CD8-positive, alpha-beta memory T cell (primary cell): ENCODE measurements at regions of chr9 and their contacts with region 1.

Region 1: DNA sequence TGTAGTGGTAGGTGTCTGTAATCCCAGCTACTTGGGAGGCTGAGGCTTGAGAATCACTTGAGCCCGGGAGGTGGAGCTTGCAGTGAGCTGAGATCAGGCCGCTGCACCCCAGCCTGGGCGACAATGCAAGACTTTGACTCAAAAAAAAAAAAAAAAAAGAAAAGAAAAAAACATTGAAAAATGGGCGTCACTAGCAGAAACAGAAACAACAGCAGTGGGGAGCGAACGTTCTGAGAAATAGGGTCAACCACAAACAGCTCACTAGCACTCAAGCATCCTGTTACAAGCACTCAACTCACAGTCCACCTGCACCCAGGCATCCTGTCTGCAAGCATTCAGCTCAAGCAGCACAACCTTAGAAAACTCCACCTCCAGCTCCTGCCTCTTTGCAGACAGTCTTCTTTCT is 17.2 kb downstream of the TRIM14 start:
- DNase-seq: peak; percentile 66 to 92 (median 90)
- H3K4me3 ChIP-seq: peak overlapping the region; percentile 23
- H3K4me3 Mint-ChIP-seq: peak overlapping the region; percentile 65 to 87 (median 78)
- H3K27ac ChIP-seq: no peak overlapping the region
- H3K27ac Mint-ChIP-seq: peak overlapping the region; percentile 93 to 99 (median 96)
- H3K4me1 ChIP-seq: peaks cover 95% of the 10 kb centered on the region
- H3K4me1 Mint-ChIP-seq: peaks cover 78 to 96% (median 95%) of the 10 kb centered on the region in 3 donors
- H3K27me3 ChIP-seq: no peaks in the 10 kb centered on the region
- H3K27me3 Mint-ChIP-seq: no peaks in the 10 kb centered on the region

Region 2: GRCh38 chr9:97447001-97447400 is 654.9 kb before region 1 on chr9:
- CTCF ChIA-PET with region 1: no interaction called
- POLR2A ChIA-PET with region 1: no interaction called
- DNase-seq: no peak
- H3K4me3 ChIP-seq: no peak overlapping the region
- H3K4me3 Mint-ChIP-seq: no peak overlapping the region
- H3K27ac ChIP-seq: no peak overlapping the region
- H3K27ac Mint-ChIP-seq: no peak overlapping the region
- H3K4me1 ChIP-seq: no peaks in the 10 kb centered on the region
- H3K4me1 Mint-ChIP-seq: no peaks in the 10 kb centered on the region
- H3K27me3 ChIP-seq: no peaks in the 10 kb centered on the region
- H3K27me3 Mint-ChIP-seq: no peaks in the 10 kb centered on the region

Region 3: GRCh38 chr9:98192503-98193335 is 90.8 kb after region 1 on chr9 and contains the start of gene CORO2A:
- CTCF ChIA-PET with region 1: interaction called, 7 read pairs
- POLR2A ChIA-PET with region 1: interaction called, 14 read pairs
- DNase-seq: peak; percentile 58 to 78 (median 74)
- H3K4me3 ChIP-seq: peak within 1 kb of the TSS; percentile 71
- H3K4me3 Mint-ChIP-seq: peak within 1 kb of the TSS; percentile 85 to 91 (median 89)
- H3K27ac ChIP-seq: peak within 1 kb of the TSS; percentile 51
- H3K27ac Mint-ChIP-seq: peak within 1 kb of the TSS; percentile 59 to 91 (median 80)
- H3K4me1 ChIP-seq: peaks cover 31% of the 10 kb centered on the region
- H3K4me1 Mint-ChIP-seq: peaks cover 40 to 48% (median 44%) of the 10 kb centered on the region in 3 donors
- H3K27me3 ChIP-seq: no peaks in the 10 kb centered on the region
- H3K27me3 Mint-ChIP-seq: no peaks in the 10 kb centered on the region
- total RNA-seq, gene CORO2A: 5.1 TPM